ENCODE measurements at regions of chr13 and their contacts with region 1.

Region 1: GRCh38 chr13:33723772-33724435 is 94.0 kb upstream of the RFC3 start:
- DNase-seq: peak; percentile 82
- H3K4me3 Mint-ChIP-seq: no peak overlapping the region
- H3K27ac Mint-ChIP-seq: no peak overlapping the region
- H3K4me1 Mint-ChIP-seq: peaks cover 27% of the 10 kb centered on the region
- H3K27me3 Mint-ChIP-seq: no peaks in the 10 kb centered on the region

Region 2: GRCh38 chr13:32639502-32640105 is 1084.3 kb before region 1 on chr13:
- CTCF ChIA-PET with region 1: no interaction called
- intact Hi-C with region 1: loop called (anchors 5 kb)
- DNase-seq: peak; percentile 64
- H3K4me3 Mint-ChIP-seq: no peak overlapping the region
- H3K27ac Mint-ChIP-seq: no peak overlapping the region
- H3K4me1 Mint-ChIP-seq: peaks cover 31% of the 10 kb centered on the region
- H3K27me3 Mint-ChIP-seq: no peaks in the 10 kb centered on the region

Region 3: GRCh38 chr13:33125821-33126570 is 597.9 kb before region 1 on chr13:
- CTCF ChIA-PET with region 1: no interaction called
- intact Hi-C with region 1: no loop called
- DNase-seq: no peak
- H3K4me3 Mint-ChIP-seq: no peak overlapping the region
- H3K27ac Mint-ChIP-seq: no peak overlapping the region
- H3K4me1 Mint-ChIP-seq: no peaks in the 10 kb centered on the region
- H3K27me3 Mint-ChIP-seq: peaks cover 12% of the 10 kb centered on the region

Region 4: DNA sequence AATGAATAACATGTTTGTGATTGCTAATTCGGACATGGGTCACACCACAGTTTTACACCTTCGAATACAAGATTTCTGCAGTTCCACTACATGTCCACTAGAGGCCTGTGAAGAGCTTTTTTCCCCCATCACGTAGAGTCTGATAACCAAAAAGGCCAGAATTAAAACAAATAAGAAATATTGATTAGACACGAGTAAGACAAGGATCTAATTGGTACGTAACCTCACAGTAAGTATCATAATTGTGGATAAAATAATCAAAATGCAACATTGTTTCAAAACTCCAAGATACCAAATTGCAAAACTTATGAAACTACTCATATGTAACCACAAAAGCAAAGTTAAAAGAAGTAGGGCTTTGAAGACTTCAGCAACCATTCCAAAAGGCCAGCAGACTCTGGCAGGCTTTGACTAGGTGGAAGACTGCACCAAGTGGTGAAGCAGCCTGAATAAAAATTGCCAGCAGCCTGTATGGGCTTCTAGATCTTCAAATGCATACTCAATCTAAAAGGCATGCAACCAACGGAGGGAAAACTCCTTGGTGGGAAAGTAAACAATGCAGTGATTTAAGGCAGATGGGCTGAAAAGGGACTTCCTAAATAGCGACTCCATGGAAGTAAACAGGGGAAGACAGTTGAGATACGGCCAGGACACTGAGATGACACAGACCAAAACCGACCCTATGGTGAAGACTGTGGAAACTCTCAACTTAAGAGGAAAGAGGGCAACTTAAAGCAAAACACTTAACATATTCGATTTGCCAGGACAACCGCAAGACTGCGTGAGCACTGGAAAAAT is 495.1 kb before region 1 on chr13:
- CTCF ChIA-PET with region 1: interaction called, 5 read pairs
- intact Hi-C with region 1: loop called (anchors 1 kb)
- DNase-seq: peak; percentile 24
- H3K4me3 Mint-ChIP-seq: no peak overlapping the region
- H3K27ac Mint-ChIP-seq: no peak overlapping the region
- H3K4me1 Mint-ChIP-seq: peaks cover 8% of the 10 kb centered on the region
- H3K27me3 Mint-ChIP-seq: peaks cover 12% of the 10 kb centered on the region

Region 5: GRCh38 chr13:33639626-33640080 is 84.3 kb before region 1 on chr13:
- CTCF ChIA-PET with region 1: interaction called, 3 read pairs
- intact Hi-C with region 1: loop called (anchors 1 kb)
- DNase-seq: peak; percentile 81
- H3K4me3 Mint-ChIP-seq: no peak overlapping the region
- H3K27ac Mint-ChIP-seq: peak overlapping the region; percentile 80
- H3K4me1 Mint-ChIP-seq: peaks cover 41% of the 10 kb centered on the region
- H3K27me3 Mint-ChIP-seq: no peaks in the 10 kb centered on the region

Region 6: GRCh38 chr13:33735276-33735675 is 11.4 kb after region 1 on chr13:
- CTCF ChIA-PET with region 1: interaction called, 26 read pairs
- intact Hi-C with region 1: no loop called
- DNase-seq: no peak
- H3K4me3 Mint-ChIP-seq: no peak overlapping the region
- H3K27ac Mint-ChIP-seq: no peak overlapping the region
- H3K4me1 Mint-ChIP-seq: no peaks in the 10 kb centered on the region
- H3K27me3 Mint-ChIP-seq: no peaks in the 10 kb centered on the region